Endothelial cell of umbilical vein (primary cell): ENCODE measurements at regions of chr5 and their contacts with region 1.

Region 1: DNA sequence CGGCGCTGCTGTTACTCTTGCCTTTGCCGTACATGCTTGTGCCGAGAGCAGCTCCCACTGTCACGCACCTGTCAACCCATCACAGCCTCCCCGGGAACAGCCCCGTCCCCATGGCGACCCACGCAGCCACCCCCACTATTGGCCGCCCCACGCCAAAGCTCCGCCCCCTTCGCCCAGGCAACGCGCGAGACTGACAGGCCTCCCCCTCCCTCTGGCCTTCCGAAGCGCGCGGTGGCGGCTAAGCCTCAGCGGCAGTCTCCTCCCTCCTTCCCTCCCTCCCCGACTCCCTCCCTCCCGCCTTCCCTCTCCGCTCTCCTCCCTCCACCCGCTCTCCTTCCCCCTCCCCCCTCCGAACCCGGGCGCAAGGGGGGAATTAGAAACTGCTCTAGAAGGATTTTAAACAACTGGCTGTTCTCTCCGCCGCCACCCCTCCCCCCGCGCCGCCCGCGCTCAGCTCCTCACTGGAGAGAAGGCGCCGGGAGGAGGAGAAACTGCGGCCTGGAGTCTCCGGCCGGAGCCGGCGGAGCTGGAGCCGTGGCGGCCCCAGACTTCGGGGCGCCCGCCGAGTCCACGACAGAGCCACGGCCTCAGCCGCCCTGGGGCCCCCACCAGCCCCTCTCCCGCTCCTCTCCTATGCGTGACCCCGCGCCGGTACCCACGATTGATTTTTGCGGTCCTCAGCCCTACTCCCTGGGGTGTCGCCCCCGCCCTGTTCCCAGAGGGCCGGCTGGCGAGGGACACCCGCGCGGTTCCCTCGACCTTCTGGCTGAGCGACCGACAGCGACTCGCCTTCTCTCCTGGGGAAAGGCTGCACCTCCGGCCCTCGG is at the start of gene SSBP2:
- DNase-seq: peak; percentile 99
- H3K4me3 ChIP-seq: peak within 1 kb of the TSS; percentile 55 to 76 (median 69)
- H3K27ac ChIP-seq: peak within 1 kb of the TSS; percentile 92
- H3K4me1 ChIP-seq: peaks cover 15% of the 10 kb centered on the region
- H3K27me3 ChIP-seq: no peaks in the 10 kb centered on the region
- CTCF ChIP-seq: no peak
- POLR2A ChIP-seq: peak; percentile 63
- total RNA-seq, gene SSBP2: 7.9 and 9.6 TPM in 2 replicates

Region 2: DNA sequence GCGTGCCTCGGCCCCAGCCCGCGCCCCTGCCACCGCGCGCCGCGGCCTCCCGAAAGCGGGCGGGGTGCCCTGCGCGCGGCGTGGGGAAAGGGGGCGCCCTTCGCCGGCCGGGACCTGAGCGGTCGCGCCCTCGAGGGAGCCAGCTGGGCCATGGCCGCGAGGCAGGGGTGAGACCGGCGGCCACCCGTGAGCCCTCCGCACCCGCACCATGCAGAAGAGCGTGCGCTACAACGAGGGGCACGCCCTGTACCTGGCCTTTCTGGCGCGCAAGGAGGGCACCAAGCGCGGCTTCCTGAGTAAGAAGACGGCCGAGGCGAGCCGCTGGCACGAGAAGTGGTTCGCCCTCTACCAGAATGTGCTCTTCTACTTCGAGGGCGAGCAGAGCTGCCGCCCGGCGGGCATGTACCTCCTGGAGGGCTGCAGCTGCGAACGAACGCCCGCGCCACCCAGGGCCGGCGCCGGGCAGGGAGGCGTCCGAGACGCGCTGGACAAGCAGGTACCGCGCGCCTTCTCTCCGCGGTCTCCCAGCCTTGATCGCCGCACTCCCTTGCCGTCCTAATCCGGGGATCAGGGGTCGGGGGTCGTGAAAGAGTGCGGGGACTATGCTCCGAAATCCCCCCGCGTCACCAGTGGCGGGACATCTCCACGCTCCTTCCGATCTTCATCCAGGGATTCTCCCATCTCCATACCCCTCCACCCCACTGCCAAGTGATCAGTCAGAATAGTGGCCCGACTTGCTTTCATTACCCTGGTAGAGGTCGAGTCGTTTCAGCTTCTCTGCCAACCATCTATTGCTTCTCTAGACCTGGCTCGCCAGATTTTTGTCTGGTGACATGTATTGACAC is 790.5 kb before region 1 on chr5:
- CTCF ChIA-PET with region 1: no interaction called
- POLR2A ChIA-PET with region 1: no interaction called
- dilution Hi-C with region 1: no loop called
- intact Hi-C with region 1: loop called (anchors 10 kb)
- DNase-seq: peak; percentile 25
- H3K4me3 ChIP-seq: peak overlapping the region; percentile 20 to 49 (median 35)
- H3K27ac ChIP-seq: no peak overlapping the region
- H3K4me1 ChIP-seq: peaks cover 35% of the 10 kb centered on the region
- H3K27me3 ChIP-seq: peaks cover 17 to 35% of the 10 kb centered on the region in 2 experiments
- CTCF ChIP-seq: peak in 1 of 2 donors; percentile 1
- POLR2A ChIP-seq: no peak

Region 3: DNA sequence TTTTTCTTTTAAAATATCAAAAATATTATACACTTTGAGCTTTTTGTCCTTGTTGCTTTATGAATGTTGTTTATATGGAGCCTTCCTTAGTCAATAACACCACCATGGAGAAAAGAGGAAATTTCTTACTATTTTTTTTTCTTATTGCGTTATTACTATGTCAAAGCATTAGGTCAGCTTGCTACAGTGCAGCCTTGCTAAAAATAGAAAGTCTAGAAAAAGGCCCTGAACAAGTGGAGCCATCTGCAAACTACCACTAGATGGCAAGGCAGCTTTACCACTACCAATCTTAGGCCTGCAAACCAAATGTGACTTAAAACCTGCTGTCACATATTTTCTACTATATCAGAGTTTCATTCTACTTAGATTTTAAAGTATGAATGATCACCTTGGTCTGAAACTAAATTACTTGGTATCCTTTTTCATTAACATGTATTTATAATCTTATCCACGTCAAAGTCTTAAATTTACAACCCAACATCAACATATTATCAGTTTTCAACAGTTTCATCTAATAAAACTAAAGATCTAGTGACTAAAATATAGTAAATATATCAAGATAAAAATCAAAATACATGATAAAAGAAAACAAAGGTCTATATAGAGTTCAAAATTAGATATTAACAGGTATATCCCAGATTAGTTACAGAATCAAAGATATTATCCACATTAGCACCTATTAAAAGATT is 244.2 kb before region 1 on chr5:
- CTCF ChIA-PET with region 1: interaction called, 47 read pairs
- POLR2A ChIA-PET with region 1: no interaction called
- dilution Hi-C with region 1: no loop called
- intact Hi-C with region 1: loop called (anchors 1 kb)
- DNase-seq: peak; percentile 94
- H3K4me3 ChIP-seq: no peak overlapping the region
- H3K27ac ChIP-seq: no peak overlapping the region
- H3K4me1 ChIP-seq: peaks cover 14% of the 10 kb centered on the region
- H3K27me3 ChIP-seq: no peaks in the 10 kb centered on the region
- CTCF ChIP-seq: peak; percentile 78
- POLR2A ChIP-seq: no peak

Region 4: DNA sequence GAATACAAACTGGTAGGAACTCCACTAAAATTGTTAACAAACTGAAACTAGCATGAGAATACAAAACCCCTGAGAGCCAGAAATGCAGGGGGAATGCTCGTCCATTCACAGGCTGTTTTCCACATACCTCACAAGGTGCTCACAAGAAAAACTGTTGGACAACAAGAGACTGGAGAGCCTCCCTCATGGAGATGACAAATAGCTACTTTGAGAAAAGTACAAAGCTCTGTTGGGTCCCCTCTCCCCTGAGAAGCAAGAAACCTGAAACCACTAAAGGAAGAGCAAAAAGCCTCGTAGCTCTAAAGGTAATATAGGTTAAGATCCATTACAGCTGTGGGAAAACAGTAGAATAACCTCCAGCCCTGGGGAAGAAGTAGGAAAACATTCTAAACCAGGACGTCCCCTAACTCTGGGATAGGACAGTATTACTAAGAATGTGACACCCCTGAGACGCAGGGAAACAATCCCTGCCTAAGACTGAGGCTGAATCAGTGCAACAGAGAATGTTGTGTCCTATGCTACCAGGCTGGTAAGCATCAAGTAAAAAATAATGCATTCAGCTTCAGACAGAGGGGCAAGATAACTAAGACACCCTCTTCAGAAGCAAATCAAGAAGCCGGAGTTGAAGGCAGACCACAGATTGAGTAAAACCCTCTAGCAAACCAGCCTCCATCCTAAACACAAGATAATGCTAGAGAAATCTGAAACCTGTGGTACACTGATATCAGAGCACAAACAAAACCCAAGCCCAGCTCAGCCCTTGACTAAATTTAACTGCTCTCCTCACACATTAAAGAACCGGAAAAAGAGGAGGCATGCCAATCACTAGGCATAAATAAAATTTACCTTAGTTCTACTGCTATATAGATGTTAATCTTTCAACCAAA is 160.5 kb before region 1 on chr5:
- CTCF ChIA-PET with region 1: no interaction called
- POLR2A ChIA-PET with region 1: no interaction called
- dilution Hi-C with region 1: no loop called
- intact Hi-C with region 1: no loop called
- DNase-seq: no peak
- H3K4me3 ChIP-seq: no peak overlapping the region
- H3K27ac ChIP-seq: no peak overlapping the region
- H3K4me1 ChIP-seq: no peaks in the 10 kb centered on the region
- H3K27me3 ChIP-seq: no peaks in the 10 kb centered on the region
- CTCF ChIP-seq: no peak
- POLR2A ChIP-seq: no peak

Region 5: GRCh38 chr5:81609810-81610375 is 141.3 kb before region 1 on chr5:
- CTCF ChIA-PET with region 1: no interaction called
- POLR2A ChIA-PET with region 1: no interaction called
- dilution Hi-C with region 1: no loop called
- intact Hi-C with region 1: no loop called
- DNase-seq: no peak
- H3K4me3 ChIP-seq: no peak overlapping the region
- H3K27ac ChIP-seq: no peak overlapping the region
- H3K4me1 ChIP-seq: no peaks in the 10 kb centered on the region
- H3K27me3 ChIP-seq: no peaks in the 10 kb centered on the region
- CTCF ChIP-seq: no peak
- POLR2A ChIP-seq: no peak

Region 6: GRCh38 chr5:81626524-81626923 is 124.7 kb before region 1 on chr5:
- CTCF ChIA-PET with region 1: no interaction called
- POLR2A ChIA-PET with region 1: no interaction called
- dilution Hi-C with region 1: no loop called
- intact Hi-C with region 1: loop called (anchors 2 kb)
- DNase-seq: peak; percentile 86
- H3K4me3 ChIP-seq: no peak overlapping the region
- H3K27ac ChIP-seq: peak overlapping the region; percentile 38
- H3K4me1 ChIP-seq: peaks cover 19% of the 10 kb centered on the region
- H3K27me3 ChIP-seq: no peaks in the 10 kb centered on the region
- CTCF ChIP-seq: no peak
- POLR2A ChIP-seq: no peak

Region 7: GRCh38 chr5:81838307-81838906 is 87.2 kb after region 1 on chr5:
- CTCF ChIA-PET with region 1: interaction called, 24 read pairs
- POLR2A ChIA-PET with region 1: no interaction called
- dilution Hi-C with region 1: no loop called
- intact Hi-C with region 1: loop called (anchors 1 kb)
- DNase-seq: peak; percentile 34
- H3K4me3 ChIP-seq: no peak overlapping the region
- H3K27ac ChIP-seq: no peak overlapping the region
- H3K4me1 ChIP-seq: no peaks in the 10 kb centered on the region
- H3K27me3 ChIP-seq: no peaks in the 10 kb centered on the region
- CTCF ChIP-seq: peak in 1 of 2 donors; percentile 46
- POLR2A ChIP-seq: no peak

Region 8: GRCh38 chr5:81971712-81972495 is 220.7 kb after region 1 on chr5 and contains the start of gene ATG10:
- CTCF ChIA-PET with region 1: no interaction called
- POLR2A ChIA-PET with region 1: interaction called, 3 read pairs
- dilution Hi-C with region 1: no loop called
- intact Hi-C with region 1: loop called (anchors 1 kb)
- DNase-seq: peak; percentile 96
- H3K4me3 ChIP-seq: peak within 1 kb of the TSS; percentile 64 to 89 (median 71)
- H3K27ac ChIP-seq: peak within 1 kb of the TSS; percentile 71
- H3K4me1 ChIP-seq: no peaks in the 10 kb centered on the region
- H3K27me3 ChIP-seq: no peaks in the 10 kb centered on the region
- CTCF ChIP-seq: no peak
- POLR2A ChIP-seq: peak; percentile 89
- total RNA-seq, gene ATG10: 3.9 and 5.9 TPM in 2 replicates

Region 9: DNA sequence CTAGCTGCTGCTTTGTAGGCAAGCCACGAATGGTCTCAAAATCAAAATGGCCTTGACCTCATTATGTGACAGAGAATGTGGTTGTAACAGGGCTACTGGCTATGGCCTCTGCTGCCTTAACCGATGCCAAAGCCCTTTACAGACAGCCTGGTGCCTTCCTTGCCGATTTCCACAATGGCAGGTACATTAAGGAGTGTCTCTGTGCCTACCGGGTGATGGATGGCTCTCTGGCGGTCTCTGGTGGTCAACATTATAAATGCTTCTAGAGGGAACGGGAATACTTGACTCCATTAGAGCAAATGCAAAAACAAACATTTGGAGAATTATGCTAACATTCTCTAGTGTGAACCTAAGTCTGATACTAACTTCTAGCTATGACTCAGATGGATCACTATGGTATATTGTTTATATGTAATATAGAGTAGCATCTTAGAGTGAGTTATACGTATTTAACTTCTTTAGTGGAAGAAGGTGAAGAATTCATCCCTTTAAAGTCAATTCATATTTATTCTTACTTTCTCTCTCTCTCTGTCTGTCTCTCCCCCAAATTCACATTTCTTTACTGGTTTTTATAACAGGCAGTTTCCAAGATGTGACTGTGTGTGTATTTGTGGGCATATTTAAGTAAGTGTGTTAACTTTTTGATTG is 474.4 kb after region 1 on chr5:
- CTCF ChIA-PET with region 1: no interaction called
- POLR2A ChIA-PET with region 1: no interaction called
- dilution Hi-C with region 1: no loop called
- intact Hi-C with region 1: loop called (anchors 2 kb)
- DNase-seq: peak; percentile 78
- H3K4me3 ChIP-seq: no peak overlapping the region
- H3K27ac ChIP-seq: no peak overlapping the region
- H3K4me1 ChIP-seq: peaks cover 2% of the 10 kb centered on the region
- H3K27me3 ChIP-seq: no peaks in the 10 kb centered on the region
- CTCF ChIP-seq: peak; percentile 66 to 85
- POLR2A ChIP-seq: no peak